ENCODE measurements at regions of chr7 and their contacts with region 1.

Region 1: DNA sequence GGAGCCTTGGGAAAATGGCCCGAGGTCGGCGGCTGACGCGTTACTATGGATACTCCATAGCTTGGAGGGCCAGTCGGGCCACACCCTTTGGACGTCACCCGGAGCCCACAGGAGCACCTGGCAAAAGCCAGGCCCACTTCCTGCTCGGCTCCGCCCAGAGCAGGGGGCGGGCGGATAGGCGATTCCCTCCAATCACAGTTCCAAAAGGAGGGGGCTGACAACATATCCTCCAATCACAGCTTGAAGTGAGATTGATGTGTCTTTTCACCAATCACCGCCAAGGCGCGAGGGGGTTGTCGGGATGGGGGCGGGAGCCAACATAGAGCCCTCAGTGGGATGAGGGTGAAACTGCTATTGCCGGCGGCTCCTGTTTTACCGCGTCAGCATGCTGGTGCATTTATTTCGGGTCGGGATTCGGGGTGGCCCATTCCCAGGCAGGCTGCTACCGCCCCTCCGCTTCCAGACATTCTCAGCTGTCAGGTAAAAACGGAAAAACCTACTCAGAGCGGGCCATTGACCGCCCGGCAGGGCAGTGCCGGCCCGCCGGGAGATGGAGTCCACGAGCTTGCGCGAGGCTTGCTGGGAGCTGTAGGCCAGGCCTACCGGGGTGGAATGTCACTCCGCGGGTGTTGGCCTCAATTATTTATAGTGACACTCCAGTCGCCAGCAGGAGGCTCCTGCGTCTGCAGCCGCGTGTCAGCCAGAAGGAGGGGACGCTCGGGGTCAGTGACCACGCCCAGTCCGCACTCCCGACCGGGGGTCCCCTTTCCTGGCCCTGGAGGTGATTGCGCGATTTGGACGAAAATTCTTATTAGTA is at the start of gene ABCB8:
- DNase-seq: peak; percentile 99 to 100
- H3K4me3 ChIP-seq: peak within 1 kb of the TSS; percentile 59
- H3K27ac ChIP-seq: peak within 1 kb of the TSS; percentile 59
- H3K4me1 ChIP-seq: peaks cover 55% of the 10 kb centered on the region
- H3K27me3 ChIP-seq: no peaks in the 10 kb centered on the region
- CTCF ChIP-seq: peak; percentile 73; the same call in 1 of the 2 replicates
- total RNA-seq, gene ABCB8: 51.8 and 61.9 TPM in 2 replicates

Region 2: DNA sequence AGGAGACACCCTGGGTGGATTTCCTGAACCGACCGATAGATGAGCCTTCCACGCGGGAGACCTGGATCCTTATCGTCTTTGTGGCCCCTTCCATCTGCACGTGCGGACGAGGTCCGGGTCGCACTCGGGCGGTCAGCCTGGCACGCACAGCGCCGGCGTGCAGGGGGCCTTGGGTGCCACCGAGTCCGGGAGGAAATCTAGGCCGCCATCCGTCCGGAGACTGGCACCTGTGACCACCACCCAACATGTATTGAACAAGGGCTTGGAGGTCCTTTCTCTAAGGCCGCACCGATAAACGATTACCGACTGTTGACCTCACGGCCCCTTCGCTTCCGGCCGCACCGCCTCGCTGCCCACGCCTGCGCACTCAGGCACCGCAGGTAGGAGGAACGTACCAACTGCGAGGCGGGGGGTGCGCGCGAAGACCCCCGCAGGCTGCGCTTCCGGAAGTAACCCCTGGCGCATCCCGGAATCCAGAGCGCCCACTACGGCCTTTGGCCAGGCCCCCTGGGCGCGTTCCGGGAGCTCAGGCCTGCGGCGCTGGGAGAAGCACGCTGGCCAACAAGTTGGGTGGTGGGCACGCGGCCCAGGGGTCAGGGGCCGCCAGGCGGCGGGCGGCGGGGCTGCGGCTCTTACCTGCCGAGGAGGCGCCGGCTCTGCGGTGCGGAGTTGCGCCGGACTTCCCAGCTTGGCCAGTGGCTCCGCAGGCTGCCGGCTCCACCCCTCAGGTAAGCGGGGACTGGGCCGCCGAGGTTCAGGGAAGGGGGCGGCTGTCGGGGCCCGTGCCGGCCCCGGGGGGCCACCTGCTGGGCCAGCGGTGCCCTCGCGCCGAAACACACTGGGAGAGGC is 705.3 kb before region 1 on chr7 and contains the starts of genes ACTR3C and LRRC61:
- CTCF ChIA-PET with region 1: interaction called, 18 read pairs
- POLR2A ChIA-PET with region 1: interaction called, 4 read pairs
- intact Hi-C with region 1: loop called (anchors 5 kb)
- DNase-seq: peak; percentile 69 to 73
- H3K4me3 ChIP-seq: peak within 1 kb of the TSS; percentile 98
- H3K27ac ChIP-seq: peak within 1 kb of the TSS; percentile 83
- H3K4me1 ChIP-seq: peaks cover 54% of the 10 kb centered on the region
- H3K27me3 ChIP-seq: no peaks in the 10 kb centered on the region
- CTCF ChIP-seq: peak; percentile 42; the same call in 1 of the 2 replicates
- total RNA-seq, gene ACTR3C: 24.1 and 34.5 TPM in 2 replicates
- total RNA-seq, gene LRRC61: 34.8 and 42.3 TPM in 2 replicates

Region 3: DNA sequence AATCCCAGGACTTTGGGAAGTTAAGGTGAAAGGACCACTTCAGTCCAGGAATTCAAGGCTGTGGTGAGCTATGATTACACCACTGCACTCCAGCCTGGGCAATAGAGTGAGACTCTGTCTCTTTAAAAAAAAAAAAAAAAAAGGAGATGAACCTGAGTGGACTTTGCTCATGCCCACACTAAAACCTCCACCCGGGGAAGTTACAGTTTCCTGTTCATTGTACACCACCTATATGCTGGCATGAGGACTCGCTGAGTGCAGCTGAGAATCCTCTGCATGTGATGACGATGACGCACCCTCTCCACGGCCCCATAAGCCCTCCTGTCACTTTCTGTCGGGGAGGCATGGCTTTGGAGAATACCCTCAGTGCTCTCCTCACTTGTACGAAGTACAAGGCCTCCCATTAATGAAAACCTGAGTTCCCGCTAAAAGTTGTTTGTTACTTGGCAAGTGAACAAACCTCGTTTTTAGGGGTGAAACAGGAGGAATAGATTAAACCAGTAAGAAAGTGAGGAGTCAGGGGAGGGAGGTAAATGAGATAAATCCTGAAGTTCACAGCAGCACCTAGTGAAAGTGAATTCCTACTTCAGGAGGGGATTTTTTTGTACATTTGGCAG is 244.1 kb before region 1 on chr7:
- CTCF ChIA-PET with region 1: interaction called, 14 read pairs
- POLR2A ChIA-PET with region 1: no interaction called
- intact Hi-C with region 1: no loop called
- DNase-seq: no peak
- H3K4me3 ChIP-seq: no peak overlapping the region
- H3K27ac ChIP-seq: no peak overlapping the region
- H3K4me1 ChIP-seq: no peaks in the 10 kb centered on the region
- H3K27me3 ChIP-seq: peaks cover 76% of the 10 kb centered on the region
- CTCF ChIP-seq: no peak

Region 4: DNA sequence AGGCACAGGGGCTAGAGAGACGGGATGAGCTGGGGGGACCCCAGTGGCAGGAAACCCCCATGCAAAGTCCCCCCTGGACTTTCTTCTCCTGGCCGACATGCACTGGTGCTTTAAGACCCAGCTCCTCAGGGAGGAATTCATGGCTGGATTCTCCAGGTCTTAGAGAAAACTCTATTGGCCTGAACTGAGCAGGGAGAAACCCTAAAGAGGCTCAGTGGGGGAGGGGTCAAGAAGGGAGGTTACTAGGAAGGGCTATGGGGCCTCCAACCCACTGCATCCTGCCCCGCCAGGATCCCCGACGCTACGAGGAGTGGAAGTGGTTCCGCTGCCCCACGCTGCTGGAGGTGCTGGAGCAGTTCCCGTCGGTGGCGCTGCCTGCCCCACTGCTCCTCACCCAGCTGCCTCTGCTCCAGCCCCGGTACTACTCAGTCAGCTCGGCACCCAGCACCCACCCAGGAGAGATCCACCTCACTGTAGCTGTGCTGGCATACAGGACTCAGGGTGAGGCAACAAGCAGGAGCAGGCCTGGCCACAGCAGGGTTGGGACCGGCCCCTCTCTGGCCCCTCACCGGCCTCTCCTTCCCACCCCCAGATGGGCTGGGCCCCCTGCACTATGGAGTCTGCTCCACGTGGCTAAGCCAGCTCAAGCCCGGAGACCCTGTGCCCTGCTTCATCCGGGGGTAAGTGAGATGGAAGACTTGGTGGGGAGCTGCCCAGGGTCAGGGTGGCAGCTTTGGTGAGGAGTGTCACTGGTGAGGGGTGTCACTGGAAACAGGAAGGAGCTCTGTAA is 17.8 kb before region 1 on chr7:
- CTCF ChIA-PET with region 1: interaction called, 7 read pairs
- POLR2A ChIA-PET with region 1: interaction called, 21 read pairs
- intact Hi-C with region 1: no loop called
- DNase-seq: peak in 1 of 2 experiments; percentile 27
- H3K4me3 ChIP-seq: no peak overlapping the region
- H3K27ac ChIP-seq: no peak overlapping the region
- H3K4me1 ChIP-seq: peaks cover 26% of the 10 kb centered on the region
- H3K27me3 ChIP-seq: no peaks in the 10 kb centered on the region
- CTCF ChIP-seq: no peak

Region 5: DNA sequence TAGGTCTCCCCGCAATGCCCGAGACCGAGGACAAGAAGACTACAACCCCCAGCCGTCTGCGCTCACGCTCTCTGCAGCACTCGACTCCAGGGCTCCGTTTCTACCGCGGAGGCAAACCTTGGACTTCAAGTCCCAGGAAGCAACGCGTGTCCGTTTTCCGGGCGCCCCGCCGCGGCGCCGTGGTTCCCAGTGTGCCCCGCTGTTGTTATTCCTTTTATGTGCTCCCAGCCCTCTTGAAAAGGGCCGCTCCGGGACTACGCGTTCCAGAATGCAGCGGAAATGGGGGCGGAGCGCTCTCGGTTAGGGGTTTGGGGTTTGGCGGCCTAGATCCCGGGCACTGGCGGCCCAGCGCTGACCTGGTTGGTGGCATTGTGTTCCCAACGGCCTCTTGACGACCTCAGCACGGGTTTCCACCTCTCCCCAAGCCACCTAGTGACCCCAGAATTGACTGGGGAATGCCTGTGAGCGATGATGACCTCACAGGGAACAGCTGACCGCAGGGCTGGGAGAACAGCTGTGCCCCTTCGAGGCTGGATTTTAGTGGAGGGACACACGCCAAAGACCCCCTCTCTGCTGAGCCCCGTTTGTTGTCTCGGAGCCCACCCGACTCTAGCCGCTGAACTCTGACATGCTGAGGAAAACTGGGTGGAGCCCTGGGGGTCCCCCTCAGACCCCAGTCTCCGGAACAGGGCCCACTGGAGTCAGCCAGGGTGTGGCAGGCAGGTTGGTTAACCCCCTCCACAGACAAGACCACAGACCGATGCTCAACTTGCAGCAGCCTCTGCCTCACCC is 29.8 kb after region 1 on chr7:
- CTCF ChIA-PET with region 1: interaction called, 8 read pairs
- POLR2A ChIA-PET with region 1: interaction called, 8 read pairs
- intact Hi-C with region 1: loop called (anchors 1 kb)
- DNase-seq: peak; percentile 99 to 100
- H3K4me3 ChIP-seq: peak overlapping the region; percentile 82
- H3K27ac ChIP-seq: peak overlapping the region; percentile 41
- H3K4me1 ChIP-seq: peaks cover 43% of the 10 kb centered on the region
- H3K27me3 ChIP-seq: no peaks in the 10 kb centered on the region
- CTCF ChIP-seq: no peak

Region 6: GRCh38 chr7:151085691-151086620 is 57.6 kb after region 1 on chr7 and contains the start of gene AGAP3:
- CTCF ChIA-PET with region 1: interaction called, 3 read pairs
- POLR2A ChIA-PET with region 1: interaction called, 13 read pairs
- intact Hi-C with region 1: loop called (anchors 1 kb)
- DNase-seq: peak; percentile 87 to 97
- H3K4me3 ChIP-seq: peak within 1 kb of the TSS; percentile 100
- H3K27ac ChIP-seq: peak within 1 kb of the TSS; percentile 41; the same call in 1 of the 2 replicates
- H3K4me1 ChIP-seq: peaks cover 47% of the 10 kb centered on the region
- H3K27me3 ChIP-seq: no peaks in the 10 kb centered on the region
- CTCF ChIP-seq: no peak
- total RNA-seq, gene AGAP3: 103 TPM in 2 replicates